ENCODE measurements at regions of chr2 and their contacts with region 1.

Region 1: GRCh38 chr2:236352761-236353593 is 88.8 kb upstream of the ASB18 start:
- DNase-seq: peak in 1 of 7 donors; percentile 29
- H3K4me3 ChIP-seq: no peak overlapping the region
- H3K27ac ChIP-seq: no peak overlapping the region
- H3K4me1 ChIP-seq: no peaks in the 10 kb centered on the region
- H3K27me3 ChIP-seq: no peaks in the 10 kb centered on the region
- CTCF ChIP-seq: peak; percentile 72 to 88 (median 82)
- POLR2A ChIP-seq: no peak

Region 2: GRCh38 chr2:237026981-237027711 is 674.2 kb after region 1 on chr2:
- intact Hi-C with region 1: loop called in 1 of 2 experiments (anchors 2 kb)
- DNase-seq: peak; percentile 46 to 89 (median 68)
- H3K4me3 ChIP-seq: no peak overlapping the region
- H3K27ac ChIP-seq: no peak overlapping the region
- H3K4me1 ChIP-seq: no peaks in the 10 kb centered on the region
- H3K27me3 ChIP-seq: no peaks in the 10 kb centered on the region
- CTCF ChIP-seq: peak; percentile 52 to 89 (median 84)
- POLR2A ChIP-seq: no peak

Region 3: DNA sequence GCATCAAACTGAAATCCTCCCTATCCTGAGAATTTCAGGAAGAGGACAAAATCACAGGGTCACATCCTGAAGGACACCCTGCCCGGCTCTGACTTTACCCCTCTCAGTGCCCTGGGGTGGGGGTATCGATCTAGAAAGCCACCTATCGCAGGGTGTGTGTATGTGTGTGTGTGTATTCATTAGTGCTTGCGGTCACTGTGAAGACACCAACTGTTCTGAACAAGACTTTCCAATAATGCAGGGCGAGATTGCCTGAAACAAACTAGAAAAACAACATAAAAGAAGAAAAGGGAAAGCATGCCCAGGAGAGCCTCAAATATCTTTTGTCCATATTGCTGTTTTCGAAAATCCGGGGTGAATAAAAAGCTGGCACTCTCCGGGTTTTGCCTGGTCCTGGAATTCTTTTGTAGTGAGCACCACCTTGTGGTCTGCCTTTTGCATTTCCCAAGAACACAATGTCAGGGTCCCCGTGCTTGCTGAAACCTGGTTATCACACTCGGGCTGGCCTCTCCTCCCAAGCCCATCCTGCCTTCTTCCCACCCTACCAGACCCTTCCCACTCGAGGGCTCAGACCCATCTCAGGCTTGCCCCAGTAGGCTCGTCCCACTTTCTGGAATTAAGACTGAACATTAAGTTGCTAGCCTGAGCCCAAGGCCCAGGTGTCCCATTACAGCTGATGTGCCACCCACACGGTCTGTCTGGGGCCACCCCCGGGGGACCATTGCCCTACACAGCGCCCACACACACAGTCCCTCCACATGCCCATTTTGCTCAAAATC is 707.7 kb after region 1 on chr2:
- intact Hi-C with region 1: loop called in 1 of 2 experiments (anchors 5 kb)
- DNase-seq: peak; percentile 40 to 73 (median 50)
- H3K4me3 ChIP-seq: no peak overlapping the region
- H3K27ac ChIP-seq: no peak overlapping the region
- H3K4me1 ChIP-seq: no peaks in the 10 kb centered on the region
- H3K27me3 ChIP-seq: no peaks in the 10 kb centered on the region
- CTCF ChIP-seq: peak; percentile 29 to 74 (median 65)
- POLR2A ChIP-seq: no peak

Region 4: GRCh38 chr2:237072067-237072931 is 719.3 kb after region 1 on chr2:
- intact Hi-C with region 1: loop called in 1 of 2 experiments (anchors 5 kb)
- DNase-seq: peak; percentile 43 to 90 (median 76)
- H3K4me3 ChIP-seq: no peak overlapping the region
- H3K27ac ChIP-seq: no peak overlapping the region
- H3K4me1 ChIP-seq: no peaks in the 10 kb centered on the region
- H3K27me3 ChIP-seq: no peaks in the 10 kb centered on the region
- CTCF ChIP-seq: peak; percentile 84 to 99 (median 88)
- POLR2A ChIP-seq: no peak

Measured in adrenal gland (tissue), 19 donors.